Activated CD8-positive, alpha-beta T cell treated with anti-CD3 and anti-CD28 coated beads, Interleukin-2, amount 10 ng/mL, durations not matched to agents 7 days and 5 days (primary cell): ENCODE measurements at regions of chr1 and their contacts with region 1.

Region 1: DNA sequence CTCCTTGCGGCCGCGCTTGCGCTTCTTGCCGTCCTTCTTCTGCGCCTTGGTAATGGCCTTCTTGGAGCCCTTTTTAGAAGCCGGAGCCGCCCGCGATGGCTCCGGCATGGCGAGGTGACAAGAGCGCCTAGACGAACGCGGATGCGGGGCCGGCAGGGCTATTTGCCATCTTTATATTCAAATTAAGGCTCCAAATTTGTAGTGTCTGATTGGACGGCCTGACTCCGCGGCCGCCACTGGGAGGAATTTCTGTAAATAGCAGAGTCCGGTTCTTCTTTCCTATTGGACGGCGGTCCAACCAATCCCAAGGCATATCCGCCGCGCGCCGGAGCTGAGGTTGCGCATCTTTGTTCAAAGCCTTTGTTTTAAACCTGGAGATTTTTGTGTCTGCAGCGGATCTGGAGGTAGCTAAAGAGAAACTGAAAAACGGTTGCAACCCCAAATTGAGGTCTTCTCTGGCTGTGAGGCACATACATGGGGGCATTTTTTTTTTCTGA is 22.6 kb upstream of the RNF187 start:
- DNase-seq: peak; percentile 97
- ATAC-seq: peak; percentile 87
- H3K4me3 Mint-ChIP-seq: peak overlapping the region; percentile 93
- H3K27ac Mint-ChIP-seq: peak overlapping the region; percentile 95
- H3K4me1 Mint-ChIP-seq: peaks cover 65% of the 10 kb centered on the region
- H3K27me3 Mint-ChIP-seq: peaks cover 4% of the 10 kb centered on the region

Region 2: DNA sequence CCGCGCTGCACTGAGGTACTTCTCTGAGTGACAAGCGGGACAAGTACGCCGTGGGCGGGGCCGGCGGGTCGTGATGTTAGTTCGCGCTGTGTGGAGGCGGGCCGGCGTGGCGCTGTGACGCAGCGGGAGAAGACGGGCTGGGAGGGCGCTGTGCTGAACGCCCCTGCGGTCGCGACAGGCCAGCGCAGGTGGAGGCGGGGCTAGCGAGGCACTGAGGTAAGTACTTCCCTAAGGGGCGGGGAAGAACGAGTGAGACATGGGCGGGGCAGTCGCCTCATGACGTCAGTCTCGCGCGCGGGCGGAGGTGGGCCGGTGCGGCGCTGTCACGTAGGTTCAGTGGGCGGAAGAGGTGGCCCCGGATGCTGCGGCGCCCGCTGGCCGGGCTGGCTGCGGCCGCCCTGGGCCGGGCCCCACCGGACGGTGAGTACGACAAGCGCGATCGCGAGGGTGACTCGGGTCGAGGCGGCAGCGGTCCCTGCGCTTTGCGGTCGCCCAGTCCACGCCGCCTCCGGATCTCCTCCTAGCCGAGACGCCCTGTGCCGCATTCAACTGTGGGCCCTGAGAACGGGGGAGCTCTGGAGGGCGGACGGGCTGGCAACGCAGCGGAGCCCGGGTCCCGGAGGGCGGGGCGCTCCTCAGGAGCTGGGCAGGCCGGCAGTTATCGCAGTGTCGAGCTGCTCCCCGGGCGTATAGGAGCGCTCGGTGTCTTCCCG is 324.4 kb before region 1 on chr1 and contains the start of gene GUK1:
- CTCF ChIA-PET with region 1: no interaction called
- POLR2A ChIA-PET with region 1: interaction called, 10 read pairs
- DNase-seq: peak; percentile 100
- ATAC-seq: peak; percentile 91
- H3K4me3 Mint-ChIP-seq: peak within 1 kb of the TSS; percentile 100
- H3K27ac Mint-ChIP-seq: peak within 1 kb of the TSS; percentile 99
- H3K4me1 Mint-ChIP-seq: peaks cover 42% of the 10 kb centered on the region
- H3K27me3 Mint-ChIP-seq: peaks cover 8% of the 10 kb centered on the region
- total RNA-seq, gene GUK1: 339 to 344 TPM

Region 3: DNA sequence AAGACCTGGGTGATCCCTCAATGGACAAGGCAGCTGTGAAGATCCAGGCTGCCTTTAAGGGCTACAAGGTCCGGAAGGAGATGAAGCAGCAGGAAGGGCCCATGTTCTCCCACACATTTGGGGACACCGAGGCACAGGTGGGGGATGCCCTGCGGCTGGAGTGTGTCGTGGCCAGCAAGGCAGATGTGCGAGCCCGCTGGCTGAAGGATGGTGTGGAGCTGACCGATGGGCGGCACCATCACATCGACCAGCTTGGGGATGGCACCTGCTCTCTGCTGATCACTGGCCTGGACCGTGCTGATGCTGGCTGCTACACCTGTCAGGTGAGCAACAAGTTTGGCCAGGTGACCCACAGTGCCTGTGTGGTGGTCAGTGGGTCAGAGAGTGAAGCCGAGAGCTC is 143.1 kb before region 1 on chr1:
- CTCF ChIA-PET with region 1: no interaction called
- POLR2A ChIA-PET with region 1: no interaction called
- DNase-seq: no peak
- ATAC-seq: no peak
- H3K4me3 Mint-ChIP-seq: no peak overlapping the region
- H3K27ac Mint-ChIP-seq: no peak overlapping the region
- H3K4me1 Mint-ChIP-seq: no peaks in the 10 kb centered on the region
- H3K27me3 Mint-ChIP-seq: no peaks in the 10 kb centered on the region

Region 4: DNA sequence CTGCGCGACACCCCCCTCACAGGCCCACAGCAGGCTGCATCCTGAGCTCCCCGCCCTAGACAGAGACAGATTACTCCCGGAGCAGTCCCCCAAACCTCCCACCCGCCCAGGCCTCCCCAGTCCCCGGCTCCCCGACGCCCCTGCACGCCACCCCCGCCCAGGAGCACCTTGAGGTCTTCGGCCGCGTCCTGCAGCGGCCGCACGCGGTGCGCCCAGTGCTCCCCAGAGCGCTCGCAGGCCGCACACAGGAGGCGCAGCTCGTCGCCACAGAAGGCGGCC is 58.6 kb before region 1 on chr1:
- CTCF ChIA-PET with region 1: interaction called, 4 read pairs
- POLR2A ChIA-PET with region 1: interaction called, 35 read pairs
- DNase-seq: peak; percentile 42
- ATAC-seq: peak; percentile 4
- H3K4me3 Mint-ChIP-seq: peak overlapping the region; percentile 90
- H3K27ac Mint-ChIP-seq: peak overlapping the region; percentile 95
- H3K4me1 Mint-ChIP-seq: peaks cover 53% of the 10 kb centered on the region
- H3K27me3 Mint-ChIP-seq: no peaks in the 10 kb centered on the region

Region 5: GRCh38 chr1:228486596-228487335 is 22.2 kb after region 1 on chr1:
- CTCF ChIA-PET with region 1: interaction called, 68 read pairs
- POLR2A ChIA-PET with region 1: interaction called, 93 read pairs
- DNase-seq: peak; percentile 86
- ATAC-seq: peak; percentile 71
- H3K4me3 Mint-ChIP-seq: peak overlapping the region; percentile 88
- H3K27ac Mint-ChIP-seq: peak overlapping the region; percentile 100
- H3K4me1 Mint-ChIP-seq: peaks cover 58% of the 10 kb centered on the region
- H3K27me3 Mint-ChIP-seq: no peaks in the 10 kb centered on the region